ENCODE measurements at regions of chr13 and their contacts with region 1.

Region 1: DNA sequence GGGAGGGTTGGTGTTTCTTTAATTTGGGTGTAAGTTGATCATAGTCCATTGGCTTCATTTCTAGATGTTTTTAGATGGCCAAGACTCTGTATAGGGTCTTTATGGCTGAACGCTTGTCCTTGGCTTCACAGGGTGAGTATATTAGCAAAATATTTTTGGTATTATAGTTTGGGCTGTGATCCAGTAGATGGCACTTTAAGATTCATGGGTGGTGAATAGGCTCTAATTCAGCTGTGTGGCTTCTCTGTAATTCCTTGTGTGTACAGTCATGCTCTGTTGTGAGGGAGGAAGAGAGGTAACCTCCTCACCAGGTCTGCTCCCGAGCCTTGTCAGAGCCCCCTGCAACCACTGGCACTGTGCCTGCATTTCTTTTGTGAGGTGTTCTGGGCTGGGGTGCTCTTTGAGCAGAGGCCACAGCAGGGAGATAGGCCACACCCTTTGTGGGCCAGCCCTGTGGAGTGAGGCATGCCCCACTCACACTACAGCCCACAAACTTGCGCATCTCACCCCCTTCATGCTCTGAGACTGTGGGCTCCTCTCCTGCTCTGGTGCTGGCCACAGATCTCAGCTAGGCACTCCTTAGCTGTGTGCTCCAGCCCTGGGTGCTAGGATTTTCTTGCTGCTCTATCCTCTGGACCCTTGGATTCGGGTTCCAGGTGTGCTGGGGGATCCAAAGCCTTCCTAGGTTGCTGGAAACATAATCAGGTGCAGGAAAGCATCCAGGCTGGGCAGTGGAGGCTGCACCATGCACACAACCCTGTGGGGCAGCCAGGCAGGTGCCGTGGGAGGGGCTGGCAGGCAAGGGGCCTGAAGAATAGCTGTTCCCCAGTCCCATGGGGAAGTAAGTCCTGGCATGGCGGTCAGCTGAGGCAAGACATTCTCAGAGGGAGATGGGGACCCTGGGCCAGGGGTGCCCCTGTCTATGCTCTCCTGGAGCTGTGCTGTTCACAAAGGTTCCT is 193.9 kb downstream of the GPC5 start:
- DNase-seq: no peak
- ATAC-seq: no peak
- H3K4me3 ChIP-seq: no peak overlapping the region
- H3K27ac ChIP-seq: no peak overlapping the region
- H3K4me1 ChIP-seq: no peaks in the 10 kb centered on the region
- H3K27me3 ChIP-seq: no peaks in the 10 kb centered on the region
- CTCF ChIP-seq: no peak
- POLR2A ChIP-seq: no peak

Region 2: DNA sequence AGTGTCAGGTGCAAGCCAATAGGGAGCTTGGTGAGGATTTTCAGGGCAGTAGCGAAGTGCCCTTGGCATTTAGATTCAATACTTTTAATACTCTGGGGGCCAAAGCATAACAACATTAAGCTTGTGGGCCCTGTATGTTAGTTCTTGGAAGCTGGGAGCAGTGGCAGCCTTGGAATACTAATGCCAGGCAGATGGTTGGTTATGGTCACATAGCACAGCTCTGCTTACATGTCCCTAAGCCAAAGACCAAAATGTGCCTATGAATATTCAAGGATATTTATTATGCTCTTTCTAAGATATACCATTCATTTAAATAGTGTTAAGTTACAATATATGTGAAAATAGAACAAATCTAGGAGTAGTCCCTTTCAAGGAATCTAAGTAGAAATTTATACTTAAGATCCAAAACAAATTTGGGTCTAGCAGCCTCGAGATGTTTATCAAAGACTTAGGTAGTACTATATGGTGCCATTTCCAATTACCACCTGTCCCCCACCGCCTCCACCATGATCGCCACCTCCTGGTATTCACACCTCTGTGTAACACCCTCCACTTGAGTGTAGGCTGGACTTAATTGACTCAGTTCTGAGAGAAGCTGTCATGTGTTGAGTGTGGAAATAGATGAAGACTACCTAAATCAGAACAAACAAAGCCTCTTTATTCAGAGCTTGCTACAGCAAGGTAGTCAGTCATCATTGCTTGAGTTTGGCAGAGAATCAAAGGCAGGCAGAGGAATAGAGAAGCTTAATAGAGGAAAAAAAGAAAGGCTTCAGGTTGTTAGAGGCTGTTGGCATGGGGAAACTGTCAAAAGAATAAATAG is 67.1 kb after region 1 on chr13:
- in situ Hi-C with region 1: loop called in 1 of 4 experiments (anchors 10 kb)
- intact Hi-C with region 1: no loop called
- DNase-seq: no peak
- ATAC-seq: no peak
- H3K4me3 ChIP-seq: no peak overlapping the region
- H3K27ac ChIP-seq: no peak overlapping the region
- H3K4me1 ChIP-seq: no peaks in the 10 kb centered on the region
- H3K27me3 ChIP-seq: no peaks in the 10 kb centered on the region
- CTCF ChIP-seq: no peak
- POLR2A ChIP-seq: no peak

Region 3: GRCh38 chr13:92994056-92994455 is 1401.7 kb after region 1 on chr13:
- in situ Hi-C with region 1: no loop called
- intact Hi-C with region 1: no loop called
- DNase-seq: no peak
- ATAC-seq: no peak
- H3K4me3 ChIP-seq: no peak overlapping the region
- H3K27ac ChIP-seq: no peak overlapping the region
- H3K4me1 ChIP-seq: no peaks in the 10 kb centered on the region
- H3K27me3 ChIP-seq: no peaks in the 10 kb centered on the region
- CTCF ChIP-seq: no peak
- POLR2A ChIP-seq: no peak

Measured in gastrocnemius medialis (tissue), 4 donors.